ENCODE measurements at regions of chr1 and their contacts with region 1.

Region 1: GRCh38 chr1:116724765-116725375 is 29.4 kb upstream of the CD2 start:
- DNase-seq: peak; percentile 45 to 74 (median 70)
- ATAC-seq: peak; percentile 77
- H3K4me3 ChIP-seq: no peak overlapping the region
- H3K4me3 Mint-ChIP-seq: no peak overlapping the region
- H3K27ac ChIP-seq: no peak overlapping the region
- H3K27ac Mint-ChIP-seq: no peak overlapping the region
- H3K4me1 ChIP-seq: no peaks in the 10 kb centered on the region
- H3K4me1 Mint-ChIP-seq: peaks cover 4 to 27% (median 13%) of the 10 kb centered on the region in 7 donors
- H3K27me3 ChIP-seq: no peaks in the 10 kb centered on the region
- H3K27me3 Mint-ChIP-seq: no peaks in the 10 kb centered on the region

Region 2: DNA sequence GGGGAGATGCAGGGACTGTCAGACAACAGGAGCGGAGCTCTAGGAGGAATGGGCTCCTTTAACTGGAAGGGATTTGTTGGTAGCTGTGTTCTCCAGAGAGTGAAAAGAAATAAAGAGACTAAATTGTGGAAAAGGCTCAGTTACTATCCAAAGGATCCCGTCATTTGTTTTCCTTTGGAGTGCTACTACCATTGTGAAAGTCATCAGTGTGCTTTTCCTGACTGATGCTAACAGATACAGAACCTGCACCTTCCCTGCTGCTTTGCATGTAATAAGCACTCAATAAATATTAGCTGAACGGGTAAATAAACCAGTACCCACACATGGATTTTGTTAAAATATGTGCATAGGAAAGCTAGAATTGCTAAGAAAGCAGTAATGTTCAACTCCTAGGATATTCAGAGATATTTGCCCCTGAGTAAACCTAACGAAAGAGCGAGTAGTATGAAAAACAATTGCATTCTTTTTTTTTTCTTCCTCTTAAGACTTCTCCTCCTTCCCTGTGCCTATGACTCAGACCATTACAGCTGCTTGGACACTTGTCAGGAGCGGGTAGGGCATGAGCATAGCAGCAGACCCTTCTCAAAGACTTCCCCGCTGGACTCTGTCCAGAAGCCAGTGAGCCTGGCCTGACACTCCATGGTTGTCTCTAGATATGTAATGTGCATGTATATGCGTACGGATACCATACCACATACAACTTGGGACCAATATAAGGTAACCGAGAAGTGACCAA is 226.5 kb after region 1 on chr1:
- CTCF ChIA-PET with region 1: no interaction called
- POLR2A ChIA-PET with region 1: no interaction called
- intact Hi-C with region 1: no loop called
- DNase-seq: no peak
- ATAC-seq: no peak
- H3K4me3 ChIP-seq: no peak overlapping the region
- H3K4me3 Mint-ChIP-seq: no peak overlapping the region
- H3K27ac ChIP-seq: no peak overlapping the region
- H3K27ac Mint-ChIP-seq: peak overlapping the region in 1 of 9 donors; percentile 82
- H3K4me1 ChIP-seq: no peaks in the 10 kb centered on the region
- H3K4me1 Mint-ChIP-seq: peaks cover 0 to 7% (median 1%) of the 10 kb centered on the region in 7 donors
- H3K27me3 ChIP-seq: no peaks in the 10 kb centered on the region
- H3K27me3 Mint-ChIP-seq: no peaks in the 10 kb centered on the region

Region 3: DNA sequence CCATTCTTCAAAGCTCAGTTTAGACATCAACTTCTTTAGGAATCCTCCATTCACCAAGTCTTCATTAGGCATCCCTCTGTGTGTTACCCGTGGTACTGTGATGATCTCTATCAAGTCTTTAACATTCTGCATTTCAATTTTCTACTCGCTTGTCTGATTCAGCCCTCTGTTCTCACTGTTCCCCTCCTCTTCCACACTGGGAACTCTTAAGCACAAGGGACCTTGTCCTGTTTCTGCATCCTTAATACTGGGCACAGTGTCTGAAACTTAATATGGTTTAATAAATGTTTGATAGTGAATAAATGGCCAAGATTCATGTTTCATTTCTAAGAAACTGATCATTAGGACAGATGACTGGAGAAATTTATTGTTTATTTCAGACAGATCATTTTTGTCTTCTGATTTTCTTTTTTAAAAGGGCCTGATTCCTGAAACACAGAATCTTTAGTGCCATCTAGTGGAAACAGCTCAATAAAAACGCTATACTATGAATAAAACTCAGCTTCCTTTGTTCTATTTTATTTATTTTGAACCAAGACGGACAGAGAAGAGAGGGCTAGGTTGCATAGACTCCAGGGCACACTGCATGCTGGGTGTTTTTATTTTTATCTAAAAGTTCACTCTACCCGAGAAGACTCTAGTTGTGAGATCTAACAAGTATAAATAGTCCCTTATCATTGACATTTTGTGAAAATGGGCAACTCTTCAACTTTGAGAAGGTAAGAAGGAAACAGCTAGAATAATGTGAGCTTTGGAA is 403.6 kb after region 1 on chr1:
- CTCF ChIA-PET with region 1: interaction called, 7 read pairs
- POLR2A ChIA-PET with region 1: no interaction called
- intact Hi-C with region 1: loop called (anchors 1 to 2 kb)
- DNase-seq: peak in 5 of 9 donors; percentile 24 to 42 (median 31)
- ATAC-seq: peak; percentile 61
- H3K4me3 ChIP-seq: no peak overlapping the region
- H3K4me3 Mint-ChIP-seq: no peak overlapping the region
- H3K27ac ChIP-seq: no peak overlapping the region
- H3K27ac Mint-ChIP-seq: no peak overlapping the region
- H3K4me1 ChIP-seq: no peaks in the 10 kb centered on the region
- H3K4me1 Mint-ChIP-seq: peaks cover 0 to 5% (median 5%) of the 10 kb centered on the region in 7 donors
- H3K27me3 ChIP-seq: no peaks in the 10 kb centered on the region
- H3K27me3 Mint-ChIP-seq: peaks cover 5 to 30% (median 12%) of the 10 kb centered on the region in 5 donors

Region 4: DNA sequence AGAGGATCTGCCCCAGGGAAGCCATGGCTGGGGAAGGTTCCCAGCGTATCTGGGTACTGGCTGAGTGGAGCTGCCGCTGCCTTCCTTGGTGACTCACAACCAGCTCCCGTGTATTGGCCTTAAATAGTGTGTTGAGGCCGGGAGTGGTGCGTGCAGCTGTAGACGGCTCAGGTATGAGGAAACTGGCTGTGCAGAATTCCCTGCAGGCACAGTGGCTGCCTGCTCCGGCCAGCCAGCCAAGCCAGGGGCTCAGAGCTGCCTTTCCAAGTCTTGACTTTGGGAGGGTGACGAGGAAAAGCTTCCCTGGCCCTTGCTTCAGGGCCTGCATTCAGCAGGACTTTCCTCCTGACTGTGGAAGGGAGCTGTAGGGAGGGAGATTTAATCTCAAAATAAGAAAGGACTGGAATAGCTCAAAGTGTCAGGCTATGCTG is 486.0 kb after region 1 on chr1 and contains the start of gene VTCN1:
- CTCF ChIA-PET with region 1: no interaction called
- POLR2A ChIA-PET with region 1: no interaction called
- intact Hi-C with region 1: no loop called
- DNase-seq: no peak
- ATAC-seq: no peak
- H3K4me3 ChIP-seq: no peak within 1 kb of the TSS
- H3K4me3 Mint-ChIP-seq: no peak within 1 kb of the TSS
- H3K27ac ChIP-seq: no peak within 1 kb of the TSS
- H3K27ac Mint-ChIP-seq: peak within 1 kb of the TSS in 1 of 9 donors; percentile 57
- H3K4me1 ChIP-seq: no peaks in the 10 kb centered on the region
- H3K4me1 Mint-ChIP-seq: no peaks in the 10 kb centered on the region
- H3K27me3 ChIP-seq: no peaks in the 10 kb centered on the region
- H3K27me3 Mint-ChIP-seq: peaks cover 7 to 36% (median 14%) of the 10 kb centered on the region in 5 donors
- total RNA-seq, gene VTCN1: not detected

Region 5: GRCh38 chr1:117371416-117372151 is 646.7 kb after region 1 on chr1:
- CTCF ChIA-PET with region 1: no interaction called
- POLR2A ChIA-PET with region 1: no interaction called
- intact Hi-C with region 1: no loop called
- DNase-seq: no peak
- ATAC-seq: no peak
- H3K4me3 ChIP-seq: no peak overlapping the region
- H3K4me3 Mint-ChIP-seq: peak overlapping the region; percentile 48 to 95 (median 70)
- H3K27ac ChIP-seq: no peak overlapping the region
- H3K27ac Mint-ChIP-seq: peak overlapping the region in 3 of 9 donors; percentile 14 to 46 (median 44)
- H3K4me1 ChIP-seq: peaks cover 16 to 37% of the 10 kb centered on the region in 2 donors
- H3K4me1 Mint-ChIP-seq: peaks cover 35 to 77% (median 66%) of the 10 kb centered on the region in 7 donors
- H3K27me3 ChIP-seq: no peaks in the 10 kb centered on the region
- H3K27me3 Mint-ChIP-seq: no peaks in the 10 kb centered on the region